K562 (cell line): ENCODE measurements at regions of chr1 and their contacts with region 1.

Region 1: DNA sequence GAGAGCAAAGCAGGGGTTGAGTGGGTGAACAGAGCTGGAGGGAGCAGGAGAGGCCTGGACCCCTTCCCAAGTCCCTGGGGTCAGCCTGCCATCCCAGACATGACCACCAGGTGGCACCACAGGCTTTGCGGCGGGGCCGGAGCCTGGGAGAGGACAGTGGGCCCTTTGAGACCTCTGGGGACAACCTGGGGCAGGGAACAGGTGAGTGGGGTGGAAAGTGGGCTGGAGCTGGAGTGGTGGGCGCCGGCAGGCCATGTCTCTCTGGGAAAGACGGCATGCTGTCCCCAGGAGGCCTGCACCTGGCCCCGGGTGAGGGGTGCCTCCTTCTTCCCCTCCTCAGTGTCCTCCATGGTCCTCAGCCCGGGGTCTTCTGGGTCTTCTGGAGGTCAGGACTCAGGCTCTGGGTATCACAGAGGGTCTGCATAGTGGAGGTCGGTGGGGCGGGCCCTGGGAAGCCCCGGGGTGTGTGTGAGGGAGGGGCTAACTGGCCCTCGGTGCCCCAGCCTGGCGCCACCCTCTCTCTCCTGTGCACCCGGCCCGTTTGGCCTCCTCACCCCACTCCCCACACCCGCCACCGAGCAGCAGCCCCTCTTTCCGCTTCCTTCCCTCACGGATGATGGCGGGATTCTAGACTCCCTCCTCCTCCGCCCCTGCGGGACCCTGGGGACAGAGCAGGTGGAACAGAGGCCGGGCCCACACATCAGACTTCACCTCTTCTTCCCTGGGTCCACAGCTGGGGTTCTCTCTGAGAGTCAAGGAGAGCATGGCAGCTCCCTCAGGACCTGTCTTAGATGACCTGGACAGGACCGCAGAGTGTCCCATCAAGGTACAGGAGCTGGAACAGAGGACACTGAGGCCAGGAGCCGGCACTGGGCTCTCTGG is 28.4 kb upstream of the PKP1 start:
- DNase-seq: peak; percentile 72 to 96 (median 93)
- ATAC-seq: peak; percentile 94
- H3K4me3 ChIP-seq: no peak overlapping the region
- H3K27ac ChIP-seq: no peak overlapping the region
- H3K4me1 ChIP-seq: peaks cover 0 to 20% of the 10 kb centered on the region in 2 experiments; a peak in 2 of 5 replicates
- H3K27me3 ChIP-seq: peaks cover 0 to 45% of the 10 kb centered on the region in 2 experiments; a peak in 2 of 5 replicates
- CTCF ChIP-seq: peak; percentile 95 to 98 (median 96)
- EP300 ChIP-seq: no peak
- POLR2A ChIP-seq: no peak
- RAD21 ChIP-seq: peak; percentile 93 to 97

Region 2: DNA sequence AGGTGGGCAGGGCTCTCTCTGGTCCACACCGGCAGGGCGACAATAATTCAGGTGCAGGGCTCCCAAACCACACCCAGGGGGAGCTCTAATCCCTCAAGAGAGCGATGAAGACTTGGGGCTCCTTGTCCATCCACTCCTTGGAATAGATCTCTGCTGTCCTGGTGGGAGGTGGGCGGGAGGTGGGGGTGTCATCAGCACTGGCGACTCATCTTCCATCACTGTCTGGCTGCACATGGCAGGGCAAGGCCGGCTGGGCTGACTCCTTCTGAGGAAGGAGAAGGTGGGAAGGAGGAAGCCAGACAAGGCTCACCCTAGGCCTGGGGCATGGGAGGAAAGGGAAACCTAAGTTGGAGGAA is 93.3 kb after region 1 on chr1:
- CTCF ChIA-PET with region 1: interaction called, 7 read pairs
- POLR2A ChIA-PET with region 1: no interaction called
- in situ Hi-C with region 1: no loop called
- intact Hi-C with region 1: loop called (anchors 5 kb)
- DNase-seq: peak; percentile 69 to 81 (median 73)
- ATAC-seq: peak; percentile 96
- H3K4me3 ChIP-seq: no peak overlapping the region
- H3K27ac ChIP-seq: no peak overlapping the region
- H3K4me1 ChIP-seq: no peaks in the 10 kb centered on the region
- H3K27me3 ChIP-seq: peaks cover 0 to 44% of the 10 kb centered on the region in 2 experiments; a peak in 2 of 5 replicates
- CTCF ChIP-seq: peak; percentile 81 to 87 (median 83)
- EP300 ChIP-seq: no peak
- POLR2A ChIP-seq: no peak
- RAD21 ChIP-seq: peak in 1 of 2 experiments; percentile 65; a peak in 3 of 4 replicates

Region 3: DNA sequence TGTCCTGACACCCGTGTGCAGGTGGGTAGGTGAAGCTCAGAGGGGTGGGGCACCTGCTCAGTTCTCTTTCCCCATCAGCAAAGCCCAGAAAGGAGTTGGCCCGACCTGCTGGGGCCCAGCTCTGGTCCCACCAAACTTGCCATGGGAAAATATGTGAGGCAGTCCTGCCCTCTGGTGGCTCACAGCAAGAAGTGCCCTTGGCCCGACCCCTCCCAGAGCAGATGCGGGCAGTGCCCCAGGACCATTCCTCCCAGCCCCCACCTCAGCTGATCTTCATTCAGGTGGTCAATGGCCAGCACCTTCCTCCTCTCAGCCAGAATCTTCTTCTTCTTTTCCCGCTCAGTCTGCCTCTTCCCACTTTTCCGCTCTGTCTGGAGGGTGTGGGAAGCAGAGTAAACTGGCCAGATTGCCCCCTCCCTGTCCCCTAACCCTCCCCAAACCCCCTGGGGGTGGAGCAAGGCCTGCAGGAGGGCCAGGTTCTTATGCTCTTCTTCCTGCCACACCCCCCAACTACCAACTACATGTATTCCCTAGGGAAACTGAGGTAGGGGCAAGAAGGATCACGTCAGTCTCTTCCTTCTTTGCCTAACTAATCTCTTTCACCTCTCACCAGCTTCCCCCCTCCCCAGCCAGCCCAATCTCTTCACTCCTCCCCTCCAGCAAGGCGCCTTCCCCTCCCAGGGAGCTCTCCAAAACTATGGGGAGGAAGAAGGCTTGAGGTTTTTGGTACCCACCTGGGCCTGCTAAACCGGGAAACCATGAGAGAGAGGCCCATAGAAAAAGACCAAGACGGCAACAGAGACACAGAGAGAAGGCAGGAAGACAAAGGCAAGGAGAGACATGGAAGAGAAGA is 107.0 kb after region 1 on chr1:
- CTCF ChIA-PET with region 1: interaction called, 60 read pairs
- POLR2A ChIA-PET with region 1: interaction called, 5 read pairs
- in situ Hi-C with region 1: no loop called
- intact Hi-C with region 1: loop called (anchors 1 kb)
- DNase-seq: peak; percentile 66 to 86 (median 84)
- ATAC-seq: peak; percentile 93
- H3K4me3 ChIP-seq: no peak overlapping the region
- H3K27ac ChIP-seq: no peak overlapping the region
- H3K4me1 ChIP-seq: peaks cover 0 to 3% of the 10 kb centered on the region in 2 experiments; a peak in 1 of 5 replicates
- H3K27me3 ChIP-seq: peaks cover 0 to 80% of the 10 kb centered on the region in 2 experiments; a peak in 2 of 5 replicates
- CTCF ChIP-seq: peak; percentile 86 to 91 (median 89)
- EP300 ChIP-seq: no peak
- POLR2A ChIP-seq: no peak
- RAD21 ChIP-seq: peak; percentile 87 to 92

Region 4: DNA sequence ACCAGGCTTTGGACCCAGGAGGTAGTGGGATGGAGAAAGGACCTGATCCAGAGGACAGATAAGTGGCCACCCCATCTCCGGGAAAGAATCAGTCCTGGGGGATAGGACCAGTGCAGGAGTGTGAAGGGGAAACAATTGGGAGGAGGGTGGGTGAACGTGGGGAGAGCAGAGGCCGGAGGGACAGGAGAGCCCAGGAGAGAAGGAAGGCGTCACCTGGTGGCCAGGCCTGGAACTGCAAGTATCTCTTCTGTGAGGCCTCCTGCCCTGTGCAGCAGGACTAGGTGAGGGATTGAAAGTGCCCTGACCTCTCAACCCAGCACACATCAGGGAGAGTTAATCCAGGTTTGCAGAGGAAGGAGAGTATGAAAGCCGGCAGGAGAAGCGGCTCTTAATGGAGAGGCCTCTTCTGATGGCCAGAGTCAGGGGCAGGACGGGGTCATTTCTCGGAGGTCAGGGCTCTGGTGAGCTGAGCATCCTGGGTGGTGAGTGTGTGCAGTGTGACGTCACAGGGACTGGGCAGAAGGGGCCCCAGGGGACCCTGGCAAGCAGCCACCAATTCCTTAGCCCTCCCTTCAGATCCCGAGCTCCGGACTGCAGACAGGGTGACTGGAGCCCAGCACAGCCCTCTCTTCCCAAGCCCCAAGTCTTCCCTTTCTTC is 153.4 kb after region 1 on chr1:
- CTCF ChIA-PET with region 1: interaction called, 8 read pairs
- POLR2A ChIA-PET with region 1: no interaction called
- in situ Hi-C with region 1: no loop called
- intact Hi-C with region 1: loop called (anchors 1 kb)
- DNase-seq: peak; percentile 86 to 92 (median 88)
- ATAC-seq: peak; percentile 97
- H3K4me3 ChIP-seq: no peak overlapping the region
- H3K27ac ChIP-seq: no peak overlapping the region
- H3K4me1 ChIP-seq: no peaks in the 10 kb centered on the region
- H3K27me3 ChIP-seq: peaks cover 33 to 69% of the 10 kb centered on the region in 2 experiments
- CTCF ChIP-seq: peak; percentile 88 to 98 (median 97)
- EP300 ChIP-seq: no peak
- POLR2A ChIP-seq: no peak
- RAD21 ChIP-seq: peak in 1 of 2 experiments; percentile 76; a peak in 2 of 4 replicates